B cell (primary cell): ENCODE measurements at regions of chr17 and their contacts with region 1.

Region 1: GRCh38 chr17:61862975-61863800 is at the start of gene BRIP1:
- DNase-seq: peak; percentile 90
- ATAC-seq: peak; percentile 100
- H3K4me3 ChIP-seq: peak within 1 kb of the TSS; percentile 71 to 96 (median 84)
- H3K4me3 Mint-ChIP-seq: peak within 1 kb of the TSS; percentile 92
- H3K27ac ChIP-seq: peak within 1 kb of the TSS; percentile 37 to 67
- H3K27ac Mint-ChIP-seq: peak within 1 kb of the TSS; percentile 89
- H3K4me1 ChIP-seq: peaks cover 3 to 10% of the 10 kb centered on the region in 2 donors
- H3K4me1 Mint-ChIP-seq: peaks cover 18% of the 10 kb centered on the region
- H3K27me3 ChIP-seq: no peaks in the 10 kb centered on the region
- H3K27me3 Mint-ChIP-seq: no peaks in the 10 kb centered on the region
- CTCF ChIP-seq: no peak
- total RNA-seq, gene BRIP1: 2.4 and 4.2 TPM in 2 replicates

Region 2: DNA sequence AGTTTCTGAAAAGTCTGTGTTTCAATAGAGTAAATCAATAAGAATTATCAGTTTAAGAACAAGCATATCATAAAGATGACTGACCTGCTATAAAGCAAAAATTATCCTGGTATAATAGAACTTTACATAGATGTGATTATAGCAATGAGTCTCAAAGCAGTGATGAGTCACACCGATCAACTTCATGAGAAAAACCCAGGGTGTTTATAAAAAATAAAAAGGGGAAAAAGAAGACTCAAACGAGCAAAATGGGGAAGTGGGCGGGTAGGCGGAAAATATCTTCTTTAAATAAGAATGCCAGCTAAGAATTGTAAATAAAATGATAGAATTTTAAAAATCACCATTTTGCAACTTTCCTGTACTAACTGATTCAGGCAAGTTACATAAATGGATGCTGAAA is 46.6 kb before region 1 on chr17:
- CTCF ChIA-PET with region 1: no interaction called
- POLR2A ChIA-PET with region 1: no interaction called
- intact Hi-C with region 1: loop called (anchors 5 kb)
- DNase-seq: peak; percentile 55
- ATAC-seq: peak; percentile 80
- H3K4me3 ChIP-seq: peak overlapping the region in 2 of 5 experiments; percentile 29 to 51
- H3K4me3 Mint-ChIP-seq: peak overlapping the region; percentile 73
- H3K27ac ChIP-seq: peak overlapping the region in 1 of 2 donors; percentile 68
- H3K27ac Mint-ChIP-seq: peak overlapping the region; percentile 80
- H3K4me1 ChIP-seq: peaks cover 9 to 35% of the 10 kb centered on the region in 2 donors
- H3K4me1 Mint-ChIP-seq: peaks cover 49% of the 10 kb centered on the region
- H3K27me3 ChIP-seq: no peaks in the 10 kb centered on the region
- H3K27me3 Mint-ChIP-seq: no peaks in the 10 kb centered on the region
- CTCF ChIP-seq: no peak

Region 3: GRCh38 chr17:61927200-61928165 is 64.3 kb after region 1 on chr17 and contains the start of gene INTS2:
- CTCF ChIA-PET with region 1: no interaction called
- POLR2A ChIA-PET with region 1: no interaction called
- intact Hi-C with region 1: loop called (anchors 1 kb)
- DNase-seq: peak; percentile 96
- ATAC-seq: peak; percentile 91
- H3K4me3 ChIP-seq: peak within 1 kb of the TSS; percentile 78 to 94 (median 87)
- H3K4me3 Mint-ChIP-seq: peak within 1 kb of the TSS; percentile 97
- H3K27ac ChIP-seq: peak within 1 kb of the TSS; percentile 72 to 77
- H3K27ac Mint-ChIP-seq: peak within 1 kb of the TSS; percentile 96
- H3K4me1 ChIP-seq: peaks cover 15 to 18% of the 10 kb centered on the region in 2 donors
- H3K4me1 Mint-ChIP-seq: peaks cover 24% of the 10 kb centered on the region
- H3K27me3 ChIP-seq: no peaks in the 10 kb centered on the region
- H3K27me3 Mint-ChIP-seq: peaks cover 6% of the 10 kb centered on the region
- CTCF ChIP-seq: no peak
- total RNA-seq, gene INTS2: 19.5 and 22.3 TPM in 2 replicates